ENCODE measurements at regions of chr7 and their contacts with region 1.

Region 1: DNA sequence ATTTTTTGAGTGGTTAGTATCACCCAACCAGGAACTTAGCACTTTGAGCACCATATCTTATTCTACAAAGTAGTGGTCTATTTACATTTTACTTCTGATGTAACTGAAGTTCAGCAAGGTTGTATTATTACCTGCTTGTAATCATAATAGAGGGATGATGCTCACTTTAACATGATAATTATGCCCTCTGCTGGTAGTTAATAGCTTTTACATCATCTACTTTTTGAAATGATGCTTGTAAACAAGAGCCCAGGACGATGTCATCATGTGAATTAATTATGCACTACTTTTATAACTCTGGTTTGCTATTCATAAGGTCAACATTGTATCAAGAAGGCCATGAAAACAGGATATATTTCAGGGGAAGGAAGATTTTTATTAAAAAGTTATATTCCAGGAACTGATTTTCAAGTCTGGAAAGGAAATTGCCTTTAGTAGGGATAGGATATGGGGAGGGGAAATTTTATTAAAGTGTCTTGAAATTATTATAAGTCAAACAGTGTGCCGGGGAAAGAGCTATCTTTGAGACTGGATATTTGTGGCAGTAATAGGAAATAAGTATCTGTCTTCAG is 80.3 kb upstream of the SCIN start:
- DNase-seq: no peak
- ATAC-seq: no peak
- H3K4me3 ChIP-seq: no peak overlapping the region
- H3K27ac ChIP-seq: no peak overlapping the region
- H3K4me1 ChIP-seq: no peaks in the 10 kb centered on the region
- H3K27me3 ChIP-seq: no peaks in the 10 kb centered on the region
- CTCF ChIP-seq: peak in 2 of 5 experiments; percentile 18 to 40
- POLR2A ChIP-seq: no peak

Region 2: DNA sequence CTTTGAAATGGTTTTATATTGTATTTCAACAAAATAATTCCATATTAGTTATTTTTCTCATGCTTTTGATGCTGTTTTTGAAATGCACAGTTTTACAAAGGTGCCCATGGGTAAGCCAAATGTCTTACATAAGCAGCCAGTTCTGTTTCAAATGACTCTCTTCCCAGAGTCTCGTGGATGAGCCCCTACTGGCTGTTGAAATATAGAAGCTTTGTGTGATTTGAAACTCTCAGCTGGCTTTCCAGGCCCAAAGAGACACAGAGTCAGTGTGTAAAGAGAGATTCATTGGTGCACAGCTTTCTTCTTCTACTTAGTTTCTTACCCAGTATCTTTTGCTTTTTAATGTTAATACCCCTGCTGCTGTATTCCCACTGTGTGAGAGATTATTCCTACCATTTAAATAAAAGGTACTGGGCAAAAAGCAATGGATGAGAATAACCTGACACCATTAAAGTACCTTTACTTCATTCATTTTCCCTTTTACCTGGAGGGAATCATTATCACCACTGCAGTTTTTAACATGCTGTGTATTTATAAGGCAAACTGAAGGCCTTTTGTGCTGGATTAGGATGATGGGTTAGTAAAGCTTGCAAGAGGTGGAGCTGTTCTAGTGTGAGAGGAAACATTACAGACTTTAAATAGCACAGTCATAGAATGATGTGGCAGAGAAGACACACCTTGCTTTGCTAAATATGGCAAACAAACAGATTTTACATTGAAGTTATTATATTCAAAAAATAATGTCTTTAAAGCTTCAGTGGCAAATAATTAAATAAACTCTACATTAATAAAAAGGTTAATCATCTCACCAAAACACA is 1073.4 kb before region 1 on chr7:
- in situ Hi-C with region 1: loop called in 1 of 4 experiments (anchors 25 kb)
- intact Hi-C with region 1: no loop called
- DNase-seq: no peak
- ATAC-seq: no peak
- H3K4me3 ChIP-seq: no peak overlapping the region
- H3K27ac ChIP-seq: no peak overlapping the region
- H3K4me1 ChIP-seq: no peaks in the 10 kb centered on the region
- H3K27me3 ChIP-seq: no peaks in the 10 kb centered on the region
- CTCF ChIP-seq: no peak
- POLR2A ChIP-seq: no peak

Region 3: DNA sequence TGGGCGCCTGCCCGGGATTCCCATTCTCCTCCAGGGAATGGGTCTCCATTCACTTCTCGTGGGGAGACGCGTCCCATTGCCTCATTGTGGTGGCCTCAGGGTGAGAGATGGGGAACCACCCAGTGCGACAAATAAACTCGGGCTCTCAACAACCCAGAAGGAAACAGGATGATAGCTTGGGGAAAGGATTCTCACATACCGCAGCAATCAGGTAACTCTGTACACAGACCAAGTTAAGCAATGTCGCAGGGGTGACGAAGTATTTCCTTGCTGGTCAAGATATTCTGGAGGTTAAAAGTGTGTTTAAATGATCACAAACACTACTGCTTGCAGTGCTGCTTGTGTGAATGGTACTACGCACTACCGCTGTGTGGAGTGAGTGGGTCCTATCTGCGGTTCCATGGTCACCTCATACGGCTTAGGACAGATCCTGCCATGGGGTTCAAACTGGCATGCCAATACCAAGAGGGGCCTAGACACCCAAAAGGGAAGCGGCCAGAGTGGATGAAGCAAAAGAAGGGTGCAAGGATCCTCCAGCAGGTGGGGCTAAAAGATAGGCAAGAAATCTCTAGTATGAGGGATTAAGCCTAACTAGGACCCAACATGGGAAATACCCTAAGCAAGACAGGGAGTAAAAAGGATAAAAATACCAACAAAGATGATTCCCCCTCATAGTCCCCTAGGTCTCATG is 422.9 kb before region 1 on chr7:
- in situ Hi-C with region 1: loop called in 1 of 4 experiments (anchors 25 kb)
- intact Hi-C with region 1: loop called (anchors 10 kb)
- DNase-seq: no peak
- ATAC-seq: no peak
- H3K4me3 ChIP-seq: no peak overlapping the region
- H3K27ac ChIP-seq: no peak overlapping the region
- H3K4me1 ChIP-seq: no peaks in the 10 kb centered on the region
- H3K27me3 ChIP-seq: no peaks in the 10 kb centered on the region
- CTCF ChIP-seq: peak in 4 of 5 experiments; percentile 14 to 49 (median 44)
- POLR2A ChIP-seq: no peak

Measured in gastrocnemius medialis (tissue), 4 donors.